Adrenal gland (tissue), 19 donors: ENCODE measurements at regions of chr17 and their contacts with region 1.

Region 1: DNA sequence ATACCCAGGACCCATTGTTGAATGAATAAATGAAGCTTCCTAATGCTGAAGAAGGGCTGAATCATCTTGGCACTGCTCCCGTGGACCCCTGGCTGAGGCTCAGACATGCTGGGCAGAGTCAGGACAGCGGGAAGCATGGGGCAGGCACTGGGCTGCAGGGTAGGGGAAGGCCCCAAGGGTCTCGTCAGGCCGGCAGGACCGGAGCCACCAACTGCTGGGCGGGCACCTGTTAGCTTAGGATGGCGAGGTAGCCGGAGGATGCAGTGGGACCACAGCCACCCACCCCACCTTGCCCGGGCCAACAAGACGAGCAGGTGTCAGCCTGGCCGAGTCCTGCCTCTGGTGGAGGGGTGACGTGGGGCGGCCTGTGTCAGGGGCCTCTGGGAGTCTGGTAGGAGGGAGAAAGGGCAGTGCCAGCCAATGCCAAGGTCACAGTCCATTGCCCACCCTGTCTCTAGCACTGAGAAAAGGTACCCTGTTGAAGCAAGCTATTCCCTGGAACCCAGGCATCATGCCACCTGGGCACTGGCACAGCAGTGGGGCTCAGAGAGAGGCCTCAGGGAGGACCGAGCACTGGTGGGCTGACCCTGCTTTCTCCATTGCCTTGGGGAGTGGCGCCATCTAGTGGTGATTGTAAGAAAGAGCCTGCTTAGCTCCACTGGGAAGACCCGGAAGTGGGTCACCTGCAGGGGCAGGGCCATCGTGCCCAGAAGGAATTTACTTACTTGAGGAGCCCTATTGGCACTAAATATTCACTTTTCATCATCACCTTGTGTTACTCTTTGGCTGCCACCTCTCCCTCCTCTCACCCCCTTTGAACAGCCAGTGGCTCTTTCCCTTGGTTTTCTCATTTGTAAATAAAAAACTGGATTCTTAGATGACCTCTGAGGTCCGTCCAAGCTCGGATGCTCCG is 3.0 kb upstream of the DLX3 start:
- DNase-seq: peak; percentile 78 to 90 (median 79)
- H3K4me3 ChIP-seq: no peak overlapping the region
- H3K27ac ChIP-seq: no peak overlapping the region
- H3K4me1 ChIP-seq: peaks cover 19 to 28% of the 10 kb centered on the region in 2 donors
- H3K27me3 ChIP-seq: peaks cover 65% of the 10 kb centered on the region
- CTCF ChIP-seq: peak; percentile 91 to 96 (median 94)
- POLR2A ChIP-seq: no peak

Region 2: DNA sequence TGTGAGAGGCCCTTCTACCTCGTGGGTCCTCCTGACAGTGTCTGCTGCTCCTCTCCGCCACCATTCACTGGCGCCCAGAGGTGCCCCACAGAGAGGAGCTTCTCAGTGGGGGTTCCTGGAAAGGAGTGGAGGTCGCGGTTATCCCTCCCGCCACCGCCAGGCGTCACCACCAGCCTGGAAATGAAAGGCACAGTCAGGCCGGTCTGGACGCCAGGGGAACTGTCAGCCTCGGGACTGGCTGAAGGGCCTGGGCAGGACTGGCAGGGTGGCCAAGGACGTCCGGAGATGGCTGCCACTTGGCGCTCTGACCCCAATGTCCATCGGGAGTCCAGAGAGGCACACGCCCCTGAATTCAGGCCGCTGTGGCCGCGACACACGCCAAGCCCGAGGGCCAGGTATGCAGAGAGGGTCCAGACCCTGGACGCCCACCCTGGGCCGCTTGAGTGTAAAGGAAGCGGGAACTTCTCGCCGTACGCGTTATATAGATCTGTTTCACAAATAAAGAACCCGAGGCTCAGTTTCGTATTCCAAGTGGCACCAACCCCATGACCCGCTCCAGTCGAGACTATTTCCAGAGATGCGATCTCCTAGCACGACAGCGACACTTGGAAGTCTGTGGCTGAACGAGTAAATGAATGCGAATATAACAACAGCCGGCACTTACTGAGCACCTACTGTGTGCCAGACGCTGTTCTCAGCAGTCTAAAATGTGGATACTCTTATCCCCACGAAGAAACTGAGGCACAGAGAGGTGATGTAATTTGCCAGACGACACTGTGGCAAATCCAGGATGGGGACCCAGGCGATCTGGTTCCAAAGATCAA is 430.0 kb before region 1 on chr17:
- intact Hi-C with region 1: loop called (anchors 10 kb)
- DNase-seq: peak; percentile 90 to 97 (median 95)
- H3K4me3 ChIP-seq: peak overlapping the region in 2 of 4 donors; percentile 23 to 46
- H3K27ac ChIP-seq: peak overlapping the region; percentile 38 to 83 (median 63)
- H3K4me1 ChIP-seq: peaks cover 4 to 21% of the 10 kb centered on the region in 2 donors
- H3K27me3 ChIP-seq: peaks cover 6% of the 10 kb centered on the region
- CTCF ChIP-seq: peak; percentile 89 to 100 (median 99)
- POLR2A ChIP-seq: peak in 1 of 2 donors; percentile 27

Region 3: DNA sequence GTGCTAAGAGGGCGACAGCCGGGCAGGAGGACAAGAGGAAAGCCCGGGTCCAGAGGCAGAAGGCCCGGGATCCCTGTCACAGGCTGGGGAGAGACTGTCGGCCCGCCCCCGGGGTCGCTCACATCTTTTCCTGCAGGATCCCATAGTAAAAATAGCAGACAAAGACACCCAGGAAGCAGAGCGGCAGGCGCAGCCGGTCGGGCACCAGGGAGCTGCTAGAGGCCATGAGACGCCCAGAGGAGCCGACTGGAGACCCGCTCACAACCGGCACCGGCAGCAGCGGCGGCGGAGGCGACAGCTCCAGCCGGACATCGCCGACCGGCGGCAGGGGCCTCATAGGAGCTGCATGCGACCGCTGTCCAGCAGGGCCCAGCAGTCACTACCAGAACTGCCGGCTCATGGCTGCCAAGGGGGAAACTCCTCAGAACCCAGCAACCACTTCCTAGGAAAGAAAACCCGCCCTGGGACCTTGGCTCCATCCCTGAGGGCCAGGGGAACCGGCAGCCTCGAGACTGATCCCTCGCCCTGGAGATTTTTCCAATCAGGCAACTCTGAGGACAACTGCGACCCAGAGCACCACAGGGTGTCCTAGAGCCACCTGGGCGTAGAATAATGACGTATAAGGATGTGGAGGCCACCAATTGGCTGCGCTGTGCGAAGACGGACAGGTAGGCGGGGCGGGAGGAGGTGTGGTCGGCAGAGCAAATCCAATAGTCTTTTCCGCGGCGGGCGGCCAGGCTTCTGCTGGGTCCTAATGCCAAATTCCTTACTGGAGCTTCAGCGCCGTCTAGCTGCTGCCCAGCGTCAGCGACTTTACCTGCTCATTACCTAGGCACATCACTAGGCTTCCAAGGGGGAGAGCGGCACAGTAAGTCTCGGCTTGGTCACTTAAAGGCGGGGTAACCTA is 290.2 kb before region 1 on chr17 and contains the start of gene SLC35B1:
- intact Hi-C with region 1: loop called in 1 of 2 experiments (anchors 10 kb)
- DNase-seq: peak; percentile 98 to 100 (median 99)
- H3K4me3 ChIP-seq: peak within 1 kb of the TSS; percentile 78 to 84 (median 81)
- H3K27ac ChIP-seq: peak within 1 kb of the TSS; percentile 23 to 96 (median 90)
- H3K4me1 ChIP-seq: peaks cover 10 to 12% of the 10 kb centered on the region in 2 donors
- H3K27me3 ChIP-seq: no peaks in the 10 kb centered on the region
- CTCF ChIP-seq: peak; percentile 48 to 73 (median 64)
- POLR2A ChIP-seq: peak; percentile 55 to 69
- total RNA-seq, gene SLC35B1: 20.9 to 87.9 (median 37.4) TPM

Region 4: DNA sequence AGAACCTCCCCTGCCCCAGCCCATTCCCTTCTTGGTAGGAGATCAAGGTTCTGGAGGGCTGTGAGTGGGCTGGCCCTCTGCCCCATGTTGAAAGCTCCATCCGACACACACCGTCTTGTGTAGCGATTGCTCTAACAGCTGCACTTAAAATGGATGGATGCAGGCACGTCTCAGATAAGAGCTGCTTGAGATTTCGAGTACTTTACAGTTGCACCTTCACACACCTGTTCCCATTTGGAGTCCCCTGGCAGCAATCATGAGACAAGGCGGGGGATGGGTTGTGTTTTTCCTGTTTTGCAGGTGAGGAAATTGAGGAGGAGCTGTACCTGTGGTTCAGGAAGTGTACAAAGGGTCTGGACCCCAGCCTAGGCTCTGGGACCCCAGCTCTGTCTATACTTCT is 124.6 kb before region 1 on chr17:
- intact Hi-C with region 1: loop called in 1 of 2 experiments (anchors 5 kb)
- DNase-seq: no peak
- H3K4me3 ChIP-seq: no peak overlapping the region
- H3K27ac ChIP-seq: no peak overlapping the region
- H3K4me1 ChIP-seq: no peaks in the 10 kb centered on the region
- H3K27me3 ChIP-seq: peaks cover 4% of the 10 kb centered on the region
- CTCF ChIP-seq: no peak
- POLR2A ChIP-seq: no peak

Region 5: DNA sequence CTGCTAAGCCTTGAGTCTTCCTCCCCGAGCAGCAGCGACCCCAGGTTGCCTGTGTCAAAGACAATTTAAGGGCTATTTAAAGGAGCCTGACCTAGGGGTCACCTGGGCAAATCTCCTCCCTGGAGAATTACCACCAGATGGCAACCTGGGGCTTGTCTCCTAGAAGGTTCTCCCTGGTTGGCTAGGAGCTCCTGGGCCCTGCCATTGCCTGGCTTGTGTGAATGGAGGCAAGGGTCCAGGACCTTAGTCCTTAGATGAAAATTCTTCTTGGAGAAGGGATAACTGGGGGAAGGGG is 98.9 kb before region 1 on chr17:
- intact Hi-C with region 1: loop called in 1 of 2 experiments (anchors 5 kb)
- DNase-seq: peak in 6 of 7 donors; percentile 30 to 60 (median 53)
- H3K4me3 ChIP-seq: no peak overlapping the region
- H3K27ac ChIP-seq: no peak overlapping the region
- H3K4me1 ChIP-seq: no peaks in the 10 kb centered on the region
- H3K27me3 ChIP-seq: peaks cover 21% of the 10 kb centered on the region
- CTCF ChIP-seq: peak in 5 of 6 experiments; percentile 31 to 48 (median 46)
- POLR2A ChIP-seq: no peak